T-cell (primary cell): ENCODE measurements at regions of chr1 and their contacts with region 1.

Region 1: DNA sequence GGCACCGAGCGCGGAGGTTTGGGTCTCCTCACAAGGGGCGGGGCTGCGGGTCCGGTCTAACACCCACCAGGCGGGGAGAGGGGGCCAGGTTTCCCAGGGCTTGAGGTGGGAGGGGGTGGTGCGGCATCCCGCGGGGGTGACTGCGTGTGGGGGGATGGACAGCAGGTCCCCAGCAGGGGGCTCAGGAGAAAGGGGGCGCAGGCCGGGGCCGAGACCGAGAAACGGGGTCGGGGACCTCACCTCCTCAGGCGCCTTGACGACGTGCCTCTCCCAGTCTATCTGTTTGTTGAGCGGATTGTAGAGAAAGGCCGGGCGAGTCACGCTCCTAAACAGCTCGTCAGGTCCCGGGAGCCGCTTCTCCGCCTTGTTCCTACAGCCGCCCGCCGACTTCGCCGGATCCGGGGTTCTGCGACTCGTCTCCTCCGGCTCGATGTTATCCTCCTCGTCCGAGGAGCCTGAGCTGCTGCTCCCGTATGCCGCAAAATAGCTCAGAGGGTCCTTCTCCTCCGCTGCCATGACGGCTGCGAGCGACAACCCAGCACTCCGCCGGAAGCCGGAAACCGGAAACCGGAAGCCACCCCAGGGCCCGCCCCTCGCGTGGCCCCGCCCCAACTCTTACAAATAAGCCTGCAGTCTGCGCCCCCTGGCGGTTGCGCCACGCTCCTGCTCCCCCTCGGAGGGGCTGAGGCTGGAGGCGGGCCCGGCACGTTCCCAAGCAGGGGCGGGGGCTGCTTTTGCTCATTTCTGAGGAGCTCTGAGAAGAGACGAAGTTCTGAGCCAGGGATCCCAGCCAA is at the start of gene C1orf52:
- DNase-seq: peak; percentile 81 to 98 (median 94)
- ATAC-seq: peak; percentile 93 to 98 (median 96)
- H3K4me3 ChIP-seq: peak within 1 kb of the TSS; percentile 57 to 98
- H3K4me3 Mint-ChIP-seq: peak within 1 kb of the TSS; percentile 92 to 98 (median 96)
- H3K27ac ChIP-seq: peak within 1 kb of the TSS; percentile 48
- H3K27ac Mint-ChIP-seq: peak within 1 kb of the TSS; percentile 94 to 95
- H3K4me1 ChIP-seq: peaks cover 16 to 17% of the 10 kb centered on the region in 2 experiments
- H3K4me1 Mint-ChIP-seq: peaks cover 33 to 47% (median 45%) of the 10 kb centered on the region in 3 donors
- H3K27me3 ChIP-seq: no peaks in the 10 kb centered on the region
- H3K27me3 Mint-ChIP-seq: no peaks in the 10 kb centered on the region
- total RNA-seq, gene C1orf52: 29.8 to 48.6 (median 39.3) TPM

Region 2: DNA sequence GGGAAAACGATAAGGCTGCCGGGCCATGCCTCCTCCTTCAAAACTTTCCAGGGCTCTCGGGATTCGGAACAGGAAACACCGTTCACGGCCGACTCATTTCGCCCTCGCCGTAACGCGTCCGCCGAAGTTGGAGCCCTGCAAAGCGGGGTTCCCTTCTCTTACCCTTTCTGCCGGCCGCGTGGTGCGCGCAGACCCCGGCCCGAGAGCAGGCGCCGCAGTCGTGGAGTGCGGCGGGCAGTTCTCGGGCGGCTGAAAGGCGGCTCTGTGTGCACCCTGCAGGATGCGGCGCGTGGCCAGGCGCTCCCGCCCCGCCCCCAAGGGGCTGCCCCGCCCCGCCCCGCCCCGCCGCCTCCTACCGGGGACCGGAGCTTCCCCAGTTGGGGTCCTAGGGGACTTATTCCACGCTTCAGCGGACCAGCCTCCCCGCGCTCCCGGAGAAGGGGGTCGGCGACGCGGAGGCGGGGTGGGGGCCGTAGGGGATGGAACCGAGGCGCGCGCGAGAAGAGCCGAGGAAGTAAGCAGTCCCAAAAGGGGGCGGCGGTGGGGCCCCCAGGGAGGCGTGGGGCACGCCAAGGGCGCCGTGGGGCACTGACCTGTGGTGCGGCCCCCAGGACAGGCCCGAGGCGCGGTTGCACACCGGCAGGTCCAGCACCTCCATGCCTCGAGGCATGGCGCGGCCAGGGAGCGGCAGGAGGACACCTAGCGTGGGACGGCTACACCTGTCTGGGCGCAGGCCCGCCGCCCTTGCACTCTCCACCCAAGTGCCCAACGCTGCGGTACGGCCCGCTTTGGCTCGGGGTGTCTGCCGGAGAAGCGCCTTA is 262.3 kb before region 1 on chr1 and contains the start of gene MCOLN2:
- CTCF ChIA-PET with region 1: interaction called, 4 to 13 read pairs
- POLR2A ChIA-PET with region 1: no interaction called
- DNase-seq: peak in 28 of 35 experiments; percentile 6 to 72 (median 32)
- ATAC-seq: peak; percentile 71 to 84 (median 77)
- H3K4me3 ChIP-seq: peak within 1 kb of the TSS; percentile 65 to 76
- H3K4me3 Mint-ChIP-seq: peak within 1 kb of the TSS; percentile 84 to 90 (median 86)
- H3K27ac ChIP-seq: peak within 1 kb of the TSS; percentile 71
- H3K27ac Mint-ChIP-seq: peak within 1 kb of the TSS; percentile 59 to 70
- H3K4me1 ChIP-seq: peaks cover 10 to 35% of the 10 kb centered on the region in 2 experiments
- H3K4me1 Mint-ChIP-seq: peaks cover 14 to 63% (median 41%) of the 10 kb centered on the region in 3 donors
- H3K27me3 ChIP-seq: peaks cover 18 to 32% of the 10 kb centered on the region in 2 experiments
- H3K27me3 Mint-ChIP-seq: peaks cover 29 to 30% of the 10 kb centered on the region in 2 donors
- total RNA-seq, gene MCOLN2: 7.6 to 19.3 (median 15.8) TPM

Region 3: DNA sequence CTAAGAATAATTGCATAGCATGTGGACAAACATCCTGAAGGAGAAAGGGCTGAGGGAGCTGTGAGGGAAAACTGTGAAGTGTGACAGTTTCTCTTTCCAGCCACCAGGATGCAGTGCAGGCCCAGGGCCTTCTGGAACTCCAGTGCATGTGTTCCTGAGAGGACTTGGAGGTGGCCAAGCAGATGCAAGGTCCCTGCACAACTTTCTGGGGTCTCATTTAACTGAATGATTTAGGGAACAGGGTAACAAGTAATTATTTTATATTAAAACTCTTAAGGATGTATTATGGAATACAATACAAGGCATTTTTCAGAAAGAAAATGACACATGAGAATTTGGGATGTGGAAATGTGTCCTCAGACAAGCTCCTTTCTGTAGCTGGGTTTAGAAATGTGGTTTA is 149.8 kb before region 1 on chr1:
- CTCF ChIA-PET with region 1: interaction called, 34 to 39 read pairs
- POLR2A ChIA-PET with region 1: no interaction called
- DNase-seq: peak in 31 of 35 experiments; percentile 2 to 67 (median 26)
- ATAC-seq: peak; percentile 71 to 87 (median 72)
- H3K4me3 ChIP-seq: no peak overlapping the region
- H3K4me3 Mint-ChIP-seq: no peak overlapping the region
- H3K27ac ChIP-seq: no peak overlapping the region
- H3K27ac Mint-ChIP-seq: no peak overlapping the region
- H3K4me1 ChIP-seq: no peaks in the 10 kb centered on the region
- H3K4me1 Mint-ChIP-seq: peaks cover 0 to 6% (median 0%) of the 10 kb centered on the region in 3 donors
- H3K27me3 ChIP-seq: no peaks in the 10 kb centered on the region
- H3K27me3 Mint-ChIP-seq: peaks cover 0 to 3% of the 10 kb centered on the region in 2 donors

Region 4: DNA sequence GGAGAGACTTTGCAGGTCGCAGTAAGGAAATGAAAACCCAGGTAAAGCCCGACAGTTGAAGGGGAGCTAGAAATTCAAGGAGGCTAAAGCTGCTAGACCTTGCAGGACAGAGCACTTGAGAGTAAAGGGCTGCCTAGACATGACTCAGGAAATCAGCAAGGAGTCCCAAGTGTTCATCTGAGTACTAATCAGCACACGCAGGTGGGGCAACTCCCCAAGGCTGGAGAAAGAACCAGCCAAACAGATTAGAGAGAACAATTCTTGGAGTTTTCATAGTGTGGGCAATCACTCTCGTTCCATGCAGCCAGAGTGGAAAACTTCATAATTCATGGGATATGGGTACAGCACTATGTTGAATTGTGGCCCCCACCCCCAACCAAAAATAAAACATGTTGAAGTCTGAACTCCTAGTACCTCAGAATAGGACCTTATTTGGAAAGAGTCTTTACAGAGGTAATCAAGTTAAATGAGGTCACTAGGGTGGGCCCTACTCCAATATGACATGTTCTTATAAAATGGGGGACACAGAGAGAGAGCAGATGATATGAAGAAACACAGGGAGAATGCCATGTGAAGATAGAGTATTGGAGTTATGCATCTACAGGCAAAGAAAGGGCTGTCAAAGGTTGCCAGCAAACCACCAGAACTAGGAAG is 86.5 kb before region 1 on chr1:
- CTCF ChIA-PET with region 1: no interaction called
- POLR2A ChIA-PET with region 1: interaction called in 1 of 2 experiments, 14 read pairs
- DNase-seq: no peak
- ATAC-seq: no peak
- H3K4me3 ChIP-seq: no peak overlapping the region
- H3K4me3 Mint-ChIP-seq: no peak overlapping the region
- H3K27ac ChIP-seq: no peak overlapping the region
- H3K27ac Mint-ChIP-seq: no peak overlapping the region
- H3K4me1 ChIP-seq: peaks cover 0 to 3% of the 10 kb centered on the region in 2 experiments
- H3K4me1 Mint-ChIP-seq: peaks cover 15 to 25% (median 20%) of the 10 kb centered on the region in 3 donors
- H3K27me3 ChIP-seq: no peaks in the 10 kb centered on the region
- H3K27me3 Mint-ChIP-seq: no peaks in the 10 kb centered on the region

Region 5: GRCh38 chr1:85276215-85276977 is 17.1 kb after region 1 on chr1 and contains the start of gene BCL10:
- CTCF ChIA-PET with region 1: interaction called, 29 to 65 read pairs
- POLR2A ChIA-PET with region 1: interaction called, 20 read pairs
- DNase-seq: peak; percentile 94 to 99 (median 97)
- ATAC-seq: peak; percentile 96 to 99 (median 98)
- H3K4me3 ChIP-seq: peak within 1 kb of the TSS; percentile 68 to 100
- H3K4me3 Mint-ChIP-seq: peak within 1 kb of the TSS; percentile 83 to 88 (median 86)
- H3K27ac ChIP-seq: peak within 1 kb of the TSS; percentile 87
- H3K27ac Mint-ChIP-seq: peak within 1 kb of the TSS; percentile 86 to 94
- H3K4me1 ChIP-seq: peaks cover 10 to 14% of the 10 kb centered on the region in 2 experiments
- H3K4me1 Mint-ChIP-seq: peaks cover 49 to 62% (median 58%) of the 10 kb centered on the region in 3 donors
- H3K27me3 ChIP-seq: no peaks in the 10 kb centered on the region
- H3K27me3 Mint-ChIP-seq: no peaks in the 10 kb centered on the region
- total RNA-seq, gene BCL10: 25.8 to 40.0 (median 28.0) TPM

Region 6: GRCh38 chr1:85356130-85356529 is 96.8 kb after region 1 on chr1:
- CTCF ChIA-PET with region 1: no interaction called
- POLR2A ChIA-PET with region 1: no interaction called
- DNase-seq: no peak
- ATAC-seq: no peak
- H3K4me3 ChIP-seq: no peak overlapping the region
- H3K4me3 Mint-ChIP-seq: no peak overlapping the region
- H3K27ac ChIP-seq: no peak overlapping the region
- H3K27ac Mint-ChIP-seq: no peak overlapping the region
- H3K4me1 ChIP-seq: no peaks in the 10 kb centered on the region
- H3K4me1 Mint-ChIP-seq: no peaks in the 10 kb centered on the region
- H3K27me3 ChIP-seq: peaks cover 0 to 3% of the 10 kb centered on the region in 2 experiments
- H3K27me3 Mint-ChIP-seq: peaks cover 0 to 3% of the 10 kb centered on the region in 2 donors